SK-N-SH (cell line): ENCODE measurements at regions of chr6 and their contacts with region 1.

Region 1: GRCh38 chr6:44257025-44257752 is at the start of gene SLC35B2:
- DNase-seq: peak; percentile 95
- H3K4me3 ChIP-seq: peak within 1 kb of the TSS; percentile 94 to 96
- H3K27ac ChIP-seq: peak within 1 kb of the TSS; percentile 73 to 91
- H3K4me1 ChIP-seq: peaks cover 0 to 37% of the 10 kb centered on the region in 2 experiments; a peak in 1 of 4 replicates
- H3K27me3 ChIP-seq: no peaks in the 10 kb centered on the region
- CTCF ChIP-seq: peak; percentile 67
- EP300 ChIP-seq: no peak
- RAD21 ChIP-seq: no peak
- polyA plus RNA-seq, gene SLC35B2: 125 and 163 TPM in 2 replicates

Region 2: DNA sequence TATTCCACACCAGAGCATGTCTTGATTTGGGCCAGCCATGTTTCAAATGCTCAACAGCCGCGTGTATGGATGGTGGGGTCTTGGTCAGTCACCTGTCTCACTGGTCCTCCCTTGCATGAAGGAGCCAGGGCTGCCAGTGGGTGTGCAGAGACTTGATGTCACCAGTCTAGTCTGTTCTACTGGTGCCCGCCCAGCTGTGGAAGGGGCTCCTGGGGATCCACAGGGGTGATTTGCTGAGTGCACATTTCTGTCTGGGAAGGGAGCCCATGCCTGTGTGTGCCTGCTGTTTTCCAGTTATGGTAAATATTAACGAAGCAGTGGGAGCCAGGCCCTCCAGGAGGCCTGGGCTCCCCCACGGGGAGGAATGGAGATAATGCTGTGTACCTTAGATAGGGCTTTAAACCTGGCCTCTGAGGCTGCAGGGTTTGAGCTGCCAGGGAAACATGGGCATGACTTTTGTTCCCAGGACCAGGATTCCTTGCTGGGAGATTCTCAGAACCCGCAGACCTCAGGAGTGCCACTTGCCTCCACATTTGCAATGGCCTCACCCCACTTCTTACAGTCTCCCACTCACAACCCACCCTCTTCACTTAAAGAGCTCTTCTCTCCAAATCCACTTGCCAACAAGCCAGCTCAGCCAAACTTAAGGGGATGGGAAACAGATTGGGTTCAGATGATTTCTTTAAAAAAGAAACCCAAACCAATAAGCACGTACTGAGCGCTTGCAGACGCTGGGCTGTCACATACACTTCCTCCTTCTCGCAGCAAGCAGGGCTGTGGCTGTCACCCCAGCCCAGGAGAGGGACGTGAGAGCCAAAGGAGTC is 433.1 kb before region 1 on chr6:
- CTCF ChIA-PET with region 1: no interaction called
- POLR2A ChIA-PET with region 1: no interaction called
- DNase-seq: no peak
- H3K4me3 ChIP-seq: no peak overlapping the region
- H3K27ac ChIP-seq: no peak overlapping the region
- H3K4me1 ChIP-seq: no peaks in the 10 kb centered on the region; a peak in 1 of 4 replicates
- H3K27me3 ChIP-seq: no peaks in the 10 kb centered on the region
- CTCF ChIP-seq: no peak
- EP300 ChIP-seq: no peak
- RAD21 ChIP-seq: no peak

Region 3: DNA sequence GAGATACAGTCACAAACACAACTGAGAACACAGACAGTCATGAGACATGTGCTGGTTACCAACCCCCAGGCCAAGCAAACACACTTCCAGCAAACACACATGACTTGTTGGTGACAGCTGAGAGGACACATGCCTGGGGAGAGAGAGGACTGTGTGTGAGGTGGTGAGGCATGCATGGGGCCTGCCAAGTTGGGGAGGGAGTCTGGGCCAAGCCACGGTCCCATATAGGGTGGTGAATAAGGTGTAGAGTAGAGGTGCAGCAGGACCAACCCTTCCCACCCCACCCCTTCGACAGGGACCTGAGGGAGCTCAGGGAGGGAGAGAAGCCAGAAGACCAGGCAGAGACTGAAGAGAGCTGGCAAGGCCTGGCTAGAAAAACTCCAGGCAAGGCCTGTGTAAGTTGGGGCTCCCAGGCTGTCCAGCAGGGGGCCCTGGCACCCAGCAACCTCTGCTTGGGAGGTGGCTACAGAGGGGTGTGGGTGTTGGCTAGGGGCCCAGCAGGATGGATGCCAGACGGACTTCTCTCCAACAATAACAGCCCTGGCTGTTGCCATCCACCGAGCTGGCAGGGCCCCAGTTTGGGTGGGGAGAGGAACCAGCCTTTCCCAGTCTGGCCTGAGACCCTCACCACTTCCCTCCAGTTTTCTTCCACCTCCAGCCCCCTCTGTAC is 35.8 kb before region 1 on chr6:
- CTCF ChIA-PET with region 1: interaction called, 10 read pairs
- POLR2A ChIA-PET with region 1: interaction called, 10 read pairs
- DNase-seq: peak; percentile 90
- H3K4me3 ChIP-seq: no peak overlapping the region; a peak in 1 of 4 replicates
- H3K27ac ChIP-seq: peak overlapping the region; percentile 52 to 98
- H3K4me1 ChIP-seq: peaks cover 17 to 65% of the 10 kb centered on the region in 2 experiments
- H3K27me3 ChIP-seq: no peaks in the 10 kb centered on the region
- CTCF ChIP-seq: peak; percentile 83
- EP300 ChIP-seq: no peak
- RAD21 ChIP-seq: peak; percentile 76

Region 4: DNA sequence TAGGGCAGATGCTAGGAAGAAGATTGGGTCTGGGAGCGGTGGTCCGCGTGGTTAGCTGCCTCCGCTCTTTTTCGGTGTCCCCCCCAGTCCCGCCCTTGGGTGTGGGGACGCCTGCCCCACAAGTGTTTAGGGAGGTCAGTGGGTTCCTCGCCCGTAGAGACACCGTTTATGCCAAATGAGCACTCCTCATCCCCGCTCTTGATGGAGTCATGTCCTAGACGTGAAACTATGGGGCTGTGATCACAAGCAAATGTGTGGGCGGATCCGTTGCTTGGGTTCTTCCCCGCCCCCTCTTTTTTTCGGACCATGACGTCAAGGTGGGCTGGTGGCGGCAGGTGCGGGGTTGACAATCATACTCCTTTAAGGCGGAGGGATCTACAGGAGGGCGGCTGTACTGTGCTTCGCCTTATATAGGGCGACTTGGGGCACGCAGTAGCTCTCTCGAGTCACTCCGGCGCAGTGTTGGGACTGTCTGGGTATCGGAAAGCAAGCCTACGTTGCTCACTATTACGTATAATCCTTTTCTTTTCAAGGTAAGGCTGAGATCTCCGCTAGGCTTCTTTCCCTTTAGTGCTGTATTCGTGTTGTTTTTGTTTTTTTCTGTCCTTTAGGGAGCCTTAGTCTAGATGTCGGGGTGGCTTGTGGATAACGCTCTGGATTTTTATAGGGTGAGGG is 10.4 kb before region 1 on chr6 and contains the start of gene HSP90AB1:
- CTCF ChIA-PET with region 1: interaction called, 90 read pairs
- POLR2A ChIA-PET with region 1: interaction called, 98 read pairs
- DNase-seq: peak; percentile 94
- H3K4me3 ChIP-seq: peak within 1 kb of the TSS; percentile 65 to 99
- H3K27ac ChIP-seq: peak within 1 kb of the TSS; percentile 86
- H3K4me1 ChIP-seq: peaks cover 13 to 24% of the 10 kb centered on the region in 2 experiments; a peak in 3 of 4 replicates
- H3K27me3 ChIP-seq: no peaks in the 10 kb centered on the region
- CTCF ChIP-seq: no peak
- EP300 ChIP-seq: peak in 1 of 2 experiments; percentile 50; a peak in 1 of 4 replicates
- RAD21 ChIP-seq: no peak
- polyA plus RNA-seq, gene HSP90AB1: 843 and 1,069 TPM in 2 replicates

Region 5: DNA sequence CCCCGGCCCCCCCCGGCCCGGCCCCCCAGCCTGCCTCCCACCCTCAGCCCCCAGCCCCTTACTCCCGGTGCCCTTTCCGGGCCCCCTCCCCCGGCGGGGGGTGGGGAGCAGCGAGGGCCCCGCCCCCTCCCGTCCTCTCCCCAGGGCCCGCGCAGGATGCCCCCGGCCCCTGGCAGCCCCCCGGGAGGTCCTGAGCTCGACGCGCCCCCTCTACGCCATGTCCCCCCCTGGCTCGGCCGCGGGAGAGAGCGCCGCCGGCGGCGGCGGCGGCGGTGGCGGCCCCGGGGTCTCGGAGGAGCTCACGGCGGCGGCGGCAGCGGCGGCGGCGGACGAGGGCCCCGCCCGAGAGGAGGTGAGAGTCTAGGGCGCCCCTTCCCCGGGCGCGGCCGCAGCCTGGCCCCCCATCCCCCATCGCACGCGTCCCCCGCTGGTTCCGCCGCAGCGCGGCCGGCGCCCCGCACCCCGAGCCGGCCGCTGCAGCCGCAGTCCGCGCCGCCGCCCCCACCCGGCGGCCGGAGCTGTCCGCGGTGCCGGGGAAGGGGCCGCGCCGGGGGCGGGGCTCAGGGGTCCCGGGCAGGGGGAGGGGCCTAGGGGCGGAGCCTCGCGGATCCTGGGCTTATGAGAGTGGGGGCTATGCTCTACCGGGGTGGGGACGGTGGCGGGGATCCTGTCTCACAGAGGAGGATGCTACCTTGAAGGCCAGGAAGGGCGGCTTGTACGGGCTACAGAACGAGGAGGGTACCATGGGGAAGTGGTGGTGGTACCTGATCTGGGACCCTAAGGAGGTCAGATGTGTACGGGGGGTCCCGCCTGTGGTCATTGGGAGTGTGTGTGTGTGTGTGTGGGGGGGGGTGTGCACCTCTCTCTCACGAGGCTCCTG is 13.6 kb after region 1 on chr6:
- CTCF ChIA-PET with region 1: interaction called, 59 read pairs
- POLR2A ChIA-PET with region 1: interaction called, 10 read pairs
- DNase-seq: peak; percentile 96
- H3K4me3 ChIP-seq: peak overlapping the region in 1 of 2 experiments; percentile 51; a peak in 2 of 4 replicates
- H3K27ac ChIP-seq: peak overlapping the region in 1 of 2 experiments; percentile 58; a peak in 1 of 4 replicates
- H3K4me1 ChIP-seq: peaks cover 2 to 21% of the 10 kb centered on the region in 2 experiments; a peak in 1 of 4 replicates
- H3K27me3 ChIP-seq: peaks cover 36% of the 10 kb centered on the region
- CTCF ChIP-seq: no peak
- EP300 ChIP-seq: no peak
- RAD21 ChIP-seq: no peak

Region 6: DNA sequence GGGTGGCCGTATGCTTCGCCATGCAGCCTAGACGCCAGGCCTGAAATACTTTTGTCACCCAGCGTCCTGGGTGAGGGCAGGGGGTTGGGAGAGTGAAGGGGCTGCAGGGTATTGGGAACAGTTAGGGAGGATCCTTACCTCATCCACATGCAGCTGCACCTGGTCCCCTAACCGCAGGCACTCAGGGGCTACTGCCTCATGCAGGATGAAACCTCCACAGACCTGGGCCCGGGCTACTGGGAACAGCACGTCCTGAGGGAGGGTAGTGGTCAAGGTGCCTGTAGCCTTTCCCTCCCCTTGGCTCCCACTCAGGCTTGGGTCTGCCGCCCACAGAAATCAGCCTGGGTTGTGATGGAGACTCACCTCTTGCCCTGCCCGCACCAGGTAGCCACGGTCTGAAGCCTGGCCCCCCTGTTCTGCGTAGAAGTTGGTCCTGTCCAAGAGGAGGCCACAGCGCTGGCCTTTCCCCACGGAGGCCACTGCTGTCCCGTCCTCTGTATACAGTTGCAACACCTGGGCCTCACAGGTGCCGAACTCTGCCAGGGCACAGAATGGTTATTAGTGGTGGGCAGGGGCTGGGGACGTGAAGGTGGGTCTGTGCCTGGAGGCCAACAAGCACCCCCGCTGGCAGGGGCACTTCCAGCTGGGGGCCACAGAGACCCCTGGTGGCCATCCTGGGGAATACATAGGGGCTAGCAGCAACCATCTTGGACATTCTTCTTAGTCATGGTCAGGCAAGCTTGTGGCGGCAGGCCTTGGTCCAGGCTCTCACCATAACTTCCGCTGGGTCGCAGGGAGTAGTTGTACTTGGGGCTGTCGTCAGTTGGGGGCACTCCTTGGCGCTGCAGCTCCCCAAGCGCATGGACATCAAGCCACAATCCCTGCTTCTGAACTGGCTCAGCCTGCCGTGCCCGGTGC is 47.4 kb after region 1 on chr6:
- CTCF ChIA-PET with region 1: interaction called, 15 read pairs
- POLR2A ChIA-PET with region 1: interaction called, 4 read pairs
- DNase-seq: peak; percentile 84
- H3K4me3 ChIP-seq: no peak overlapping the region
- H3K27ac ChIP-seq: no peak overlapping the region; a peak in 1 of 4 replicates
- H3K4me1 ChIP-seq: no peaks in the 10 kb centered on the region
- H3K27me3 ChIP-seq: no peaks in the 10 kb centered on the region
- CTCF ChIP-seq: peak; percentile 76
- EP300 ChIP-seq: no peak
- RAD21 ChIP-seq: peak; percentile 54

Region 7: DNA sequence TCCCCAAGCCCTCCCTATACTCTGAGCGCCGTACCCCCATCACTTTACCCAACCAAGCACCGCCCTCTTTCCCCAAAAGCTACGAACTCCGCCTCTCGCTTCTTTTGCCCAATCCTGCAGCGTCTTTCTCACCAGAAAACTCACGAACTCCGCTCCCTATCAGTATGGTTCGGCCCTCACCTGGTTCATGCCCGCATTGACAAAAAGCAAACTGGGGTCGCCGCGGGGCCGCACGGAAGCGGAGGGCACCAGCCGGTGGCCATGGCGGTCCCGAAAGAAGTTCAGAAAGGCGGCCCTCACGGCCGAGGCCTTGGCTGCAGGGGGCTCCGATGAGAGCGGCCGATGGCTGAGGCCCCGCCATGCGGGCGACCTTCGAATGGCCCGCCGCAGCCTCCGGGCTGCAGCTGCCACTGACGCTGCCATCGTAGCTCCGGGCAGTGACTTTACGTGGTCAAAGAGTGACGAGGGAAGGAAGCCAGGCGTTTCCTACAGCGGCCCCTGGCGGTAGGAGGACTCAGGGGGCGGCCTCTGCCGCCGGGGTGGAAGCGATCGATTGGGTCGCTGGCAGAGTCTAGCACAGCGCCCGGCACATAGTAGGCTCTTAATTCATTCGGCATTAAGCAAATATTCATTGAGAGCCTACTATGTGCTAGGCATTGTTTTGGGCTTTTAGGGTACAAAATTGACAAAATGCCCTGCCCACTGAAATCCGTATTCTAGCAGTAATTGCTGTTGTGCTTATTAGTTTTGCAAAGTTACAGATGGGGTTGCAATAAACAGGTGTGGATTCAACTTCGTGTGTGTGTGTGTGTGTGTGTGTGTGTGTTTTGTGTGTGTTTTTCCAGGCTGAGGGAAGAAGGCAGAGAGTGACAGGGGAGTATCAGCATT is 56.0 kb after region 1 on chr6 and contains the start of gene AARS2:
- CTCF ChIA-PET with region 1: interaction called, 12 read pairs
- POLR2A ChIA-PET with region 1: interaction called, 3 read pairs
- DNase-seq: peak; percentile 92
- H3K4me3 ChIP-seq: peak within 1 kb of the TSS; percentile 90 to 96
- H3K27ac ChIP-seq: peak within 1 kb of the TSS; percentile 24 to 85; a peak in 3 of 4 replicates
- H3K4me1 ChIP-seq: peaks cover 4 to 8% of the 10 kb centered on the region in 2 experiments; a peak in 3 of 4 replicates
- H3K27me3 ChIP-seq: no peaks in the 10 kb centered on the region
- CTCF ChIP-seq: peak; percentile 95
- EP300 ChIP-seq: peak in 1 of 2 experiments; percentile 15; a peak in 1 of 4 replicates
- RAD21 ChIP-seq: no peak
- polyA plus RNA-seq, gene AARS2: 9.0 and 9.5 TPM in 2 replicates

Region 8: DNA sequence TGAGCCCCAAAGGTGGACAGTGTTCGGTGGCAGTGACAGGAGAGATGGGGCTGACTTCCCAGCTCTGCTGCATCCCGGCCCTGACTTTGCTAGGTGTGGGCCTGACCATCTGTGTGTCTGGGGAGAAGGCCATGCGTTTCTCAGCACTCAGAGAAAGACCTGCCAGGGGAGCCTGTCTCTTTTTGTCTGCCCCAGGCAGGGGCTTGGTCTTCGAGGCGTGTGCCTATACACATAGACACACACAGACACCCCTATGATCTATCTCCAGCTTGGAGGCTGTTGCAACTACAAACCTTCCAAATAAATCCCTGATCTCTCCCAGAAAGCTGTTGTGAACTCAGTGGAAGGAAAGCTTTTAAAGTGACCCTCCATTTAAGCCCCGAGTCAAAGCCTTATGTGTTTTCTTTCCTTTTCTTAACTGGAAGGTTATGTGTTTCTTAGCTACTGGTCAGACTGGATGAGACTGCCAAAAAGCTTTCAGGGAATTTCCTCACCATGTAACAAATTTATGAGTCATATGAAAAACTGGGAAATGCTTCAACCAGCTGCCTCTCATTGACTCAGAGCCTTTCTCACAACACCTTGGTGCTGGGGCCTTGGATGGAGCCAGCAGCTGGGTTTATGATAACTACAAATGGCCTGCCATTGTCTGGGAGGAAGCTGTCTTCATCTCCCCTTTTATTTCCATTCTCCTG is 232.9 kb after region 1 on chr6:
- CTCF ChIA-PET with region 1: no interaction called
- POLR2A ChIA-PET with region 1: no interaction called
- DNase-seq: no peak
- H3K4me3 ChIP-seq: no peak overlapping the region
- H3K27ac ChIP-seq: peak overlapping the region; percentile 24 to 76; a peak in 3 of 4 replicates
- H3K4me1 ChIP-seq: peaks cover 0 to 18% of the 10 kb centered on the region in 2 experiments; a peak in 3 of 4 replicates
- H3K27me3 ChIP-seq: no peaks in the 10 kb centered on the region
- CTCF ChIP-seq: no peak
- EP300 ChIP-seq: peak in 1 of 2 experiments; percentile 88; a peak in 2 of 4 replicates
- RAD21 ChIP-seq: no peak